ENCODE measurements at regions of chr5 and their contacts with region 1.

Region 1: DNA sequence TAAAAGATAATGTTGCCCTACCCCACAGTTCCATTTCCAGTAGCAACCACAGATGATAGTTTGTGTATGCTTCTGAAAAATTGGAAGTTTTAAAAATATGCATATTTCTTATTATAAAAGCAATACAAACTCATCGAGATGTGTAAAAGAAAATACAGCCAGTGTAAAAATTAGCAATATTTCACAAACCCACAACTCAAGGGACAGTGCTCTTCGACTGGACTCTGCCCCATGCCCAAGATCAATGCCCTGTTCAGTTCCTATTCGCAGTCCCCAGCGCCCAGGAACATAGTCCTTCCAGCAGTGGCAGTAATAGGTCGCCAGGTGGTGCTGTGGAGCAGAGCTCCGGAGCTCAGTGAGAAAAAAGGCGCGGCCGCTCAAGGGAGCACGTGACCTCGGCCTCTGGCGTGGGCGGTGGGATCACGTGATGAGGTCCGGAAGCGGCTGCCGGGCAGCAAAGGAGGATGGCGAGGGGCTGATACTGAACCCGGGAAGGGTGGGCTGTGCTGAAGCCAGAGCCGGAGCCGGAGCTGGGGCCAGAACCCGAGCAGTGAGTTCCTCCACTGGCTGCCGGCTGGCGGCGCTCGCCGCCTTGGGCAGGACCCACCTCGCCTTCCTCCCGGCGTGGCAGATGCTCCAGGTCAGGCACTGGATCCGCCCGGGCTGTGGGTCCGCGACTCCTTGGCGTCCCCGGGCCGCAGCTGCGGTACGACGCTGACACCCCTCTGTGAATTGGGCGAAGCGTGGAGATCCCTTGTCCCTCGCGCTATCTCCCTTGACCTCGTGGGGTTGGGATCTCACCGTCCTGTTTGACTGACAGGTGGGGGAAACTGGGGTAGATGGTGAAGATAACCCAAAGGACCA is at the start of gene SLC36A1:
- DNase-seq: peak; percentile 92 to 96 (median 95)
- H3K4me3 ChIP-seq: peak within 1 kb of the TSS; percentile 64
- H3K27ac ChIP-seq: no peak within 1 kb of the TSS
- H3K4me1 ChIP-seq: peaks cover 2% of the 10 kb centered on the region
- H3K27me3 ChIP-seq: no peaks in the 10 kb centered on the region
- CTCF ChIP-seq: peak; percentile 95 to 98 (median 97)
- EP300 ChIP-seq: no peak
- POLR2A ChIP-seq: no peak
- total RNA-seq, gene SLC36A1: 3.6 to 9.7 (median 5.4) TPM

Region 2: DNA sequence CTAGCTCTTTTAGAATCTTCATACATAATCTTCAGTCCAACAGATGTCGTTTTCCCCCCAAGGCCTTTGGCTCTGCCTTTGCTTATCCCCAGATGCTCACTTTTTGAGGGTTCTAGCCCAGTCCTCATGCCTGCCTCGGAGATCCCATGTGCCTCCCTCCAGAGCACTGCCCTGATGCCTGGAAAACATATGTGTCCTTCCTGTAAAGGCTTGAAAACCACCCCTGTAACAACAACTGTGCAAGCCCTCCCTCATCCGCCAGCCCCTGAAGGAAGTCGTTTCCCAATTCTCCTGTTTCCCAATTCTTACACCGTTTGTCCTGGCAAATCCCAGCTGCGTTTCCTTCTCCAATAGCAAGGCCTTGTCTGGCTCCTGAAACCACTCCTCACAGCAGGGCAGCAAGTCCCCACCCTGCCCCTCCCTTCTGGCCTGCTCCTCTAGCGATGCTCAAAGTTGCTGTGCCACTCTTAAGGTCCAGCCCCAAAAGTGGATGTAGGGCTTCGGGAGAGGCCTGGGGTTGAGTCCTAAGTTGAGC is 52.2 kb after region 1 on chr5:
- intact Hi-C with region 1: loop called in 2 of 4 experiments (anchors 2 to 5 kb)
- DNase-seq: no peak
- H3K4me3 ChIP-seq: no peak overlapping the region
- H3K27ac ChIP-seq: no peak overlapping the region
- H3K4me1 ChIP-seq: no peaks in the 10 kb centered on the region
- H3K27me3 ChIP-seq: no peaks in the 10 kb centered on the region
- CTCF ChIP-seq: no peak
- EP300 ChIP-seq: no peak
- POLR2A ChIP-seq: no peak

Region 3: DNA sequence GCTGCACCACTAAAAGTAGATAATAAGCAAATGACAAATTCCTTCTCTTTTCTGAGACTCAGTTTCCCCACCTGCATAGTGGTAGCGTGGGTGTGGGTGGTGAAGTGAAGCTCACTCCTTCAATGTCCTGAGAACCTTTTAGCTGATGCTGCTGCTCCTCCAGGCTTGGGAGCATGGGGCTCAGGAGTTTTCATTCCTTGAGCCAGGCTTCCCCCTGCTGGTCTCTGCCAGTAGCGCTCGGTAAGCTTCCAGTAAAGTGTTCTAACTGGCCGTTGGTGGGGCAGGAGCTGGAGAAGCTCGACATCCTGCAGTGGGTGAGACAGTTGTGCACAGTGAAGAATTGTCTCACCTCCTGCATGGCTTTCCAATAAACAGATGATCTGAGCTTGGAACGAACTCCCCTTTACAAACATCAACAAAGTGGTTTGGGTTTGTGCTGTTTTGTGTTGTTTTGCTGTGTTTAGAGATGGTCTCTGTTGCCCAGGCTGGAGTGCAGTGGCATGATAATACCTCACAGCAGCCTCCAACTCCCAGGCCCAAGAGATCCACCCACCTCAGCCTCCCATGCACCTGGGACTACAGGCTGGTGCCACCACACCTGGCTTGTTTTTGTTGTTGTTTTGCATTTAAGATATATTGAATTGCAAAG is 204.7 kb after region 1 on chr5:
- intact Hi-C with region 1: loop called (anchors 2 to 10 kb)
- DNase-seq: peak; percentile 61 to 85 (median 77)
- H3K4me3 ChIP-seq: no peak overlapping the region
- H3K27ac ChIP-seq: no peak overlapping the region
- H3K4me1 ChIP-seq: no peaks in the 10 kb centered on the region
- H3K27me3 ChIP-seq: no peaks in the 10 kb centered on the region
- CTCF ChIP-seq: peak; percentile 57 to 77 (median 60)
- EP300 ChIP-seq: no peak
- POLR2A ChIP-seq: no peak

Region 4: GRCh38 chr5:151659001-151659754 is 211.8 kb after region 1 on chr5:
- intact Hi-C with region 1: loop called in 2 of 4 experiments (anchors 5 to 10 kb)
- DNase-seq: peak; percentile 85 to 92 (median 90)
- H3K4me3 ChIP-seq: no peak overlapping the region
- H3K27ac ChIP-seq: peak overlapping the region in 1 of 2 donors; percentile 39
- H3K4me1 ChIP-seq: peaks cover 10% of the 10 kb centered on the region
- H3K27me3 ChIP-seq: no peaks in the 10 kb centered on the region
- CTCF ChIP-seq: peak; percentile 77 to 93 (median 87)
- EP300 ChIP-seq: no peak
- POLR2A ChIP-seq: no peak

Region 5: GRCh38 chr5:151686674-151687407 is 239.4 kb after region 1 on chr5 and contains the start of gene SPARC:
- intact Hi-C with region 1: no loop called
- DNase-seq: peak; percentile 83 to 85 (median 84)
- H3K4me3 ChIP-seq: peak within 1 kb of the TSS; percentile 52
- H3K27ac ChIP-seq: peak within 1 kb of the TSS; percentile 72 to 80
- H3K4me1 ChIP-seq: peaks cover 8% of the 10 kb centered on the region
- H3K27me3 ChIP-seq: no peaks in the 10 kb centered on the region
- CTCF ChIP-seq: no peak
- EP300 ChIP-seq: no peak
- POLR2A ChIP-seq: peak; percentile 81
- total RNA-seq, gene SPARC: 220 to 1,059 (median 717) TPM

Region 6: GRCh38 chr5:151740336-151740942 is 293.0 kb after region 1 on chr5:
- intact Hi-C with region 1: loop called (anchors 5 to 10 kb)
- DNase-seq: peak; percentile 82 to 88 (median 87)
- H3K4me3 ChIP-seq: no peak overlapping the region
- H3K27ac ChIP-seq: peak overlapping the region; percentile 38 to 50
- H3K4me1 ChIP-seq: peaks cover 14% of the 10 kb centered on the region
- H3K27me3 ChIP-seq: no peaks in the 10 kb centered on the region
- CTCF ChIP-seq: peak; percentile 72 to 93 (median 93)
- EP300 ChIP-seq: no peak
- POLR2A ChIP-seq: no peak

Region 7: DNA sequence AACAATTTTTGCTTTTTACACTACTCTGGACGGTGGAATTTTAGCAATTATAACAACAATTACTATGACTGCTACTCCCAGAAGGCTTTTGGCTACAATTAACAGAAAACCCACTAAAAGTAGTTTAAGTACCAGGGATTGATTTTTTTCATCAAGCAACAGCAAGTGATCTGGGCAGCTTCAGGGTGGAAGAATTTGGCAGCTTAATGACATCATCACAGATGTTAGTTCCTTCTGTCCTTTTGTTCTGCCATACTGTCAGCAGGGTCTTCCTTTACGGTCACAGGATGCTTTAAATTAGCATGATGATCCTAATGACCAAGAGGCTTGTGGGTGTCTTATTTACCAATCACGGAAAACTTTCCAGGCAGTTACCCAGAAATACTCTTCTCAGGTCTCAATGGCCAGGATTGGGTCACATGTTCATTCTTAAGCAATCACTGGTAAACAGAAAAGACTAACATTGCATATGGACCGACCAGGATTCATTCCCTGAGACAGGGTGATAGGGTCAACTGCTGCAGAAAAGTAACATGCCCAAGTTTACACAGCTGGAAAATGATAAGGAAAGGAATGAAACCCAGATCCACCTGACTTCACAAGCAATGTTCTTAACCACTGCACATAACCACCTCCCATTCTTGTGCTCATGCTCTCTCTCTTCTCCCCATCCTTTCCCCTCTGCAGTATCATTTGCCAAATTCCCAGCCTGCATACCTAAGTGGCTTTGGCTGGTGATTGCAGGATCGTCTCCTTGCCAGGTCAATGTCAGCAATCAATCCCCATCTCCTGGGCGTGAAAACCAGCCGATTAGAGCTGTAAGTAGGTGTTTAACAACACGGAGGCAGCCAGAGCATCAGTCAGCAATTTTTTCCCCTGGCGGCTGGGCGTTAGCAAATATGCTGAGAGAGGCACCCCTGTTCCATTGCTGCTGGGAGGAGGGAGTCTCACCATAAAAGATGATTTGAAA is 738.2 kb after region 1 on chr5:
- intact Hi-C with region 1: no loop called
- DNase-seq: no peak
- H3K4me3 ChIP-seq: no peak overlapping the region
- H3K27ac ChIP-seq: no peak overlapping the region
- H3K4me1 ChIP-seq: peaks cover 13% of the 10 kb centered on the region
- H3K27me3 ChIP-seq: no peaks in the 10 kb centered on the region
- CTCF ChIP-seq: no peak
- EP300 ChIP-seq: no peak
- POLR2A ChIP-seq: no peak